Dendritic cell treated with granulocyte-macrophage colony-stimulating factor and Interleukin-4, amounts not matched to agents 40 ng/mL and 50 ng/mL, for 4 days (primary cell): ENCODE measurements at regions of chr4 and their contacts with region 1.

Region 1: DNA sequence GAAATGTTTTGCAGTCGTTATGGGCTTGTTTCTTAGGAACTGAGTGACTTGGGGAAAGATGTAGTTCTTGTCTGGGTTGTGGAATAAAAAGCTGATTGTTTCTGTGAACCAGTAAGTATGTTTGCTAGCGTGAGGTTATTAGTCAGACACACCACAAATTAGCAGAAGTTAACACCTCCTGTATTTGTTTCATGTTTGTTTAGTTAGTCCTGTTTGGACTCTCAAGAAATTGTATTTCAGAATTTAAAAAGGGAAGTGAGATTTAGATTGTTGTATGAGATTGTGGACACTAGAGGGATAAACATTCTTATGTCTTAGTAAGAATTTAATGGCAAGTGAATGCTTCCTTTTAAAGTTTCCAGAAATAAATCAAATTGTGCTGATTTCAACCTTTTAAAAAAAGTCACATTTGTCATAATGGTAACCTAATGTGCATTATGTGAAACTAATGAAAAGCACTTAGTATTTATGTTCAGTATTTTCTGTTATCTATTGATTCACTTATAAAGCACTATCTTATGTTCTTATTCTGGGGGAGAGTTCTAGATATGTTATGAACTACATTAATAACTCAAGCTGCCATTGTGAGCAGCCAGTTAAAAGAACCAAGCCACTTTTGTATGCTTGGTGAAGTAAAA is 25.6 kb downstream of the ATP10D start:
- H3K4me3 Mint-ChIP-seq: peak overlapping the region; percentile 7
- H3K27ac Mint-ChIP-seq: peak overlapping the region; percentile 89
- H3K4me1 Mint-ChIP-seq: peaks cover 54% of the 10 kb centered on the region
- H3K27me3 Mint-ChIP-seq: no peaks in the 10 kb centered on the region

Region 2: DNA sequence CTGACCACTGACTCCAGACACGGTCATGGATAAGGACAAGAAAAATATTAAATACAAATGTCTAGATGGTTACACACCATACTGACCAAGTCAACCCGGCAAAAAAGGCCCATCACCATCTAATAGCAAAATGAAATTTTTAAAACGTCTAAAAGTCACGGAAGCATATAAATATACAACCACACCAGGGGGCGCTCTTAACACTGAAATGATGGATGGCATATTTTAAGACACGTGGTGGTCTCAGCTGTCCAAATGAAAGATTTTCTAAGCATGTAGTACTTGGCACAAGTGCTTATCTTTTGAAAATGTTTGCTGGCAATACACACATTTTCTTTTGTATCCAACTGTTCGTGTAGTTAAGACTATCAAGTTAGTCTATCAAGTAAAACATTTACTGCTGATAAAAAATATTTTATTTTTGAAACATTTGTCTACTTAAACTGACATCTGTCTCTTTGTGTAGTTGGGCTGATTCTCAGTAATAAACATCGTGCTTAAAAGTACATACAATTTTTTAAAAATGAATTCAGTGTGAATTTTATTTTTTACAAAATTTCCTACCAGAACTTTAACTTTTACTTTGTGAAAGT is 666.2 kb before region 1 on chr4:
- intact Hi-C with region 1: no loop called
- H3K4me3 Mint-ChIP-seq: no peak overlapping the region
- H3K27ac Mint-ChIP-seq: no peak overlapping the region
- H3K4me1 Mint-ChIP-seq: no peaks in the 10 kb centered on the region
- H3K27me3 Mint-ChIP-seq: no peaks in the 10 kb centered on the region

Region 3: GRCh38 chr4:47485047-47485692 is 25.5 kb before region 1 on chr4 and contains the start of gene ATP10D:
- intact Hi-C with region 1: loop called (anchors 1 kb)
- H3K4me3 Mint-ChIP-seq: peak within 1 kb of the TSS; percentile 90
- H3K27ac Mint-ChIP-seq: peak within 1 kb of the TSS; percentile 100
- H3K4me1 Mint-ChIP-seq: peaks cover 28% of the 10 kb centered on the region
- H3K27me3 Mint-ChIP-seq: no peaks in the 10 kb centered on the region

Region 4: GRCh38 chr4:47562297-47562696 is 51.7 kb after region 1 on chr4:
- intact Hi-C with region 1: loop called (anchors 10 kb)
- H3K4me3 Mint-ChIP-seq: no peak overlapping the region
- H3K27ac Mint-ChIP-seq: no peak overlapping the region
- H3K4me1 Mint-ChIP-seq: peaks cover 10% of the 10 kb centered on the region
- H3K27me3 Mint-ChIP-seq: no peaks in the 10 kb centered on the region